ENCODE measurements at regions of chr6 and their contacts with region 1.

Region 1: DNA sequence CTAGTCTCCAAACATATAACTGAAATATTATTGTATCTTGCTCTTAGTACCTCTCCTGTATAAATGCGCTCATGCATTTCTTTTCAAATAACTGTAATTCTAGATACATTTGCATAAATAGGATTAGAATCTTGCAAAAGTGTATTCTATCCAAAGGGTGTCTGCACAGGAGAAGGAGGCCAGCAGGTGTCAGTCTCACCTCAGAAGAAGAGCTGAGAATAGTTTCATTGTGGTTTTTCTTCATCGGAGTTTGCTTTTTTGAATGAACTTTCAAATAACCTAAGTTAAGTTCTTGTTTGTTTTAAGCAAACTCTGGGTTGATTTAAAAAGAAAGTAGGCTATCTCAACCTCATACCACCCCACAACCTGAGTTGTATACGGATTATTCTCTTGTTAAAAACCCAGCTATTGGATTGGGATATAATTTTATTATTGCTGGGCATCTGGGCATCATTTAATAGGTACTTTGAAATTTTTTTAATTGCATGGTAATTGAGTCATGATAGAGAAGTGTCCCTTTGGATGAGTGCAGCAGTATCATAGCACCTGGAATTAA is 125.0 kb upstream of the MLIP start:
- DNase-seq: peak in 1 of 2 donors; percentile 33
- H3K4me3 ChIP-seq: no peak overlapping the region
- H3K27ac ChIP-seq: no peak overlapping the region
- H3K4me1 ChIP-seq: peaks cover 0 to 25% (median 9%) of the 10 kb centered on the region in 4 donors
- H3K27me3 ChIP-seq: no peaks in the 10 kb centered on the region
- CTCF ChIP-seq: peak; percentile 70 to 76

Region 2: DNA sequence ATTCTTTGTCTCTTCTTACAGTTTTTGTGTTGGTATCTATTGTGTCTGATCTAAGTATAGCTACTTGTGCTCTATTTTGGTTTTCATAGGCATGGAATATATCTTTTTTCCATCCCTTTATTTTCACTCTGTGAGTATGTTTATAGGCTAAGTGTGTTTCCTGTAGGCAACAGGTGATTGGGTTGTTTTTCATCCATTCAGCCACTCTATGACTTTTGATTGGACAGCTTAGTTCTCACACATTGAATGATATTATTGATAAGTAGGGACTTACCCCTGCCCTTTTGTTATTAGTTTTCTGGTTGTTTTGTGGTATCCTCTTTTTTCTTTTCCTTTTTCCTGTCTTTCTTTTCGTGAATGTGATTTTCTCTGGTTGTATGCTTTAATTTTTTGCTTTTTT is 192.9 kb after region 1 on chr6:
- intact Hi-C with region 1: no loop called
- DNase-seq: no peak
- H3K4me3 ChIP-seq: no peak overlapping the region
- H3K27ac ChIP-seq: no peak overlapping the region
- H3K4me1 ChIP-seq: no peaks in the 10 kb centered on the region
- H3K27me3 ChIP-seq: no peaks in the 10 kb centered on the region
- CTCF ChIP-seq: no peak

Region 3: DNA sequence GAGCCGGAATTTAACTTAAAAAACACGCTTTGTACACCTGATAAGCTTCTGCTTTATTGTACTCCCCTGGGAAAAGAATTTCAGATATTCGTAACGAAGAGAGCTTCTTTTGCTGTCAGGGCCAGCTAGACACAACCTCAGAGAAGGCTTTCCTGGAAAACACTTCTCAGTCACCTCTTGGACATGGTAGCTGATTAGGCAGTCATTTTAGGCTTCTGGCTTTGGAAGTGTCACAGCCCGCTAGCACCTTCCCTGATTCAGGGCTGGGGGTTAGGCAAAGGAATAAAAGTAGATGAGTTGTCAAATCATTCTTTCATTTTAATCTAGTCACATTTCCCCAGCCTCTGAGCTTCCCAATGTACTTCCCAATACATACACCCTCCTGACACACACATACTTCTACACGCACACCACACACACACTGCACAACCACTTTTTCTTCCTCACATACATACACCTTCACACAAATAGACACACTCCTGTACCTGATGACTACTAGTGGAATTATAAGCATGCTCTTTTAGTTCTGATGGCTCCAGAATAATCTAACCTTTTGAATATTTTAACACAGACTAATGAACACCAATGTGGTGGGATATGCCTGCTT is 287.1 kb after region 1 on chr6:
- intact Hi-C with region 1: loop called (anchors 10 kb)
- DNase-seq: no peak
- H3K4me3 ChIP-seq: no peak overlapping the region
- H3K27ac ChIP-seq: no peak overlapping the region
- H3K4me1 ChIP-seq: no peaks in the 10 kb centered on the region
- H3K27me3 ChIP-seq: no peaks in the 10 kb centered on the region
- CTCF ChIP-seq: no peak

Region 4: DNA sequence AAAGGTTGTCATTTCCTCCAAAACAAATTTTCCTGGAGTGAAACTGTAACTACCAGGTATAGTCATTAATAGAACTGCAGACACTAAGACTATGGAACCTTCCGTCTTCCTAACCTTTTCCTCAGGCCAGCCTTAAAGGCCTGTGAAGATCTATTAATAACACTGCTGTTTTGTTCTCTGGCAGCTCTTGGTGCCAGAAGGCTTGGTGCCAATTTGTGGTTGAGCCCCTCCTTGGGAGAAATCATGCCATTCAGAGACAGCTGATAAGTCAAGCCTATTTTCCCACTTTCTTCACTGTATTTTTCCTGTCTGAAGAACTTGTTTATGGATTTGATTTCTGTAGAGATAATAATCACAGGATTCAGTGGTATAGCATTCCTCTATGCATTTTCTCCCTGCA is 1252.9 kb after region 1 on chr6:
- intact Hi-C with region 1: loop called (anchors 10 kb)
- DNase-seq: no peak
- H3K4me3 ChIP-seq: no peak overlapping the region
- H3K27ac ChIP-seq: no peak overlapping the region
- H3K4me1 ChIP-seq: peaks cover 0 to 9% (median 0%) of the 10 kb centered on the region in 4 donors
- H3K27me3 ChIP-seq: no peaks in the 10 kb centered on the region
- CTCF ChIP-seq: no peak

Region 5: DNA sequence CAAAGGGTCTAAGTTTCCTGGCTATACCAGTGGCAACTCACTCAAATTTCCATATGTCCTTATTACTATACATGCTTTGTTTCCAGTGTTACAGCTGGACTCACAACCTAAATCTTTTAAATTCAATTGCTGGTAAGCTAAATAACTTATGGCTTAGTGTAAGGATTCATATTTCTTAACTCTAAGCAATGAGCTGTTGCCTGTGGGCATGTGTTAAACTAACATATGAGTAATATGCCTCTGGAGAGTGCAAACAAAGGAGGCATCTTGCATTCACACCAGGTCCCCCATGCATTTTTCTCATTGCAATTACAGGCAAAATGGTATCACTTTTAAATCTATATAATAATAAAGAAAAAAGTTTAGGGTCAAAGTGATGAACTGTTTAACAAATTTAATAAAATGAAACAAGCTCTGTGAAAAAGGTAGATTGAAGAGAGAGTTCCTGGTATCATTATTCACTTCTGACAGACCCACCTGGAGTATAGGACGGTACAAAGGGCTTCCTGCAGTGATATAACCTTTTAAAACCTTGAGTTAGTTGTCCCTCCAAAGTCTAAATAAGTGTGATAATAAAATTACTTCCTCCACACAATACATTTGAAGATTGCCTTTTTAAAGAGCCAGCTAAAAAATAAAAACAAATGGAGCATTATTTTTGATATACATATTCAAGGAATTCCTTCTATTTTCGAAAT is 1650.3 kb after region 1 on chr6:
- intact Hi-C with region 1: no loop called
- DNase-seq: no peak
- H3K4me3 ChIP-seq: no peak overlapping the region
- H3K27ac ChIP-seq: no peak overlapping the region
- H3K4me1 ChIP-seq: no peaks in the 10 kb centered on the region
- H3K27me3 ChIP-seq: no peaks in the 10 kb centered on the region
- CTCF ChIP-seq: no peak